ENCODE measurements at regions of chr9 and their contacts with region 1.

Region 1: GRCh38 chr9:69174616-69175463 is 763 bp downstream of the TJP2 start:
- DNase-seq: peak; percentile 84

Region 2: DNA sequence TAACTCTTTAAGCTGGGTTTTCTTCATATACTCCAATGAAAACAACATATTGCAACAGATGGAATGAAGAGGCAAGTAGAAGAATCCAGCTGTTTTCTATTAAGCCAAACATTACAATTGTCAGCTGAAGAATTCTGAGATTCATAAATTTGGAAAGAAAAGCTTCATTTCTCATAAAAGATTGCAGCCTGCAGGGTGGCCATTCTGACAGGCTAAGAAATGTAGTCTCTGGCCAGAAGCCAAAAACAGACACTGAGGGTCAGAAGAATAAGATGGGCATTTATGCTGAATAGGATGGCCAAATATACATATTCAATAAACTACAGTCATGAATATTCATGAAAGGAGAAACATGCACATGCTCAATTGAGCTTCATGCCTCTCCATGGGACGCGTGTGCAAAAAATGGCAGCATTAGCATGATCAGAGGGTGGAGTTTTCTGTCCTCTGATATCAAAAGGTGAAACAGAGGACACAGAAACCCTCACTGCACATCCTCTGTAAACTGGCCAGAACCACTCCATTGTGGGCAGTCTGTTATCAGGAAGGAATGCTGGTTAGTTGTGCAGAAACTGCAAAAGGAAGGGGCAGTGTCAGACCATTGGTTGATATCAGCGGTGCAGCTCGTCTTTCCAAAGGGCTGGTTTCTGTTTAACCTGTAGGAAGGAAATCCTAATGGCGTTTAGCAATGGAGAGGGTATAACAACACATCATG is 89.1 kb before region 1 on chr9:
- in situ Hi-C with region 1: loop called (anchors 25 kb)
- DNase-seq: no peak

Region 3: GRCh38 chr9:69324549-69325401 is 149.9 kb after region 1 on chr9 and contains the start of gene ENTREP1:
- in situ Hi-C with region 1: loop called (anchors 25 kb)
- DNase-seq: peak; percentile 67
- total RNA-seq, gene ENTREP1: 2.7 and 3.1 TPM in 2 replicates